ENCODE measurements at regions of chr4 and their contacts with region 1.

Region 1: DNA sequence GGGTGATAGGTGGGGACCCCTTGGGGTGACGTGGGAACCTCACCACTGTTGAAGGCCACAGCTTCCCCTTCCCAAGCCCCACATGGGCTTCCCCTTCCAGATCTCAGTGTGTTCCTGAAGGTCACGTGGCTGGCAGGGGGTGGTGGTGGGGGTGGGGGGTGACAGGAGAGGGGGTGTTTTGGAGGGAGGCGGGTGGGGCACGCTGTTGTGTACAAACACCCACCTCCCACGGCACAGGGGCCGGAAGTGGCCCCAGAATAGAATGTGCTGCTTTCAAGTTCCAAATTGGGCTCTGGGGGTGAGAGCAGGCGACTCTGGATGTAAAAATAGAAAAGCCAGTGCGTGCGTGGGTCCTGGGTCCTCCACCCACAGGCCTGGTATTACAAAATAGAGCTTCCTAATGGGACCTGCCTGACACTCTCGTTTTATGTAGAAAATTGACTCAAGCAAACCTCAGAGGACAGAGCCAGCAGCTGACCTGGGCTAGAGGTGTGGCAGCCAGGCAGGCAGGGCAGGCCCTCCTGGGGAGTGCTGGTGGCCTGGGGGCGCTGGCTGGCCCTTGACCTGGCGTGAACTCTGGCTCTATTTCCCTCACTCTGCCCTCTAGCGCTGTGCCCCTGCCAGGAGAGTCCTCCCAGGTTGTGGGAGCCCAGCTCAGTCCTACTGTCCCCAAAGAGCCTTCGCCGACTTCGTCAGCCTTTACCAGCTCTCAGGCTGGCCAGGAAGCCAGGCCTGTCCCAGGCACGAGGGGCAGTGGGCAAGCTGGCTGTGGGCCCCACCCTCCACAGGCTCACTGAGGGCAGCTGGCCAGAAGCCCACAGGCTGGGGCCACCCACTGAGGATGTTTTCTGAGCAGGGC is 5.4 kb upstream of the SH3BP2 start:
- DNase-seq: peak; percentile 87
- ATAC-seq: peak; percentile 47
- H3K4me3 Mint-ChIP-seq: no peak overlapping the region
- H3K27ac Mint-ChIP-seq: peak overlapping the region; percentile 95
- H3K4me1 Mint-ChIP-seq: peaks cover 50% of the 10 kb centered on the region
- H3K27me3 Mint-ChIP-seq: no peaks in the 10 kb centered on the region
- CTCF ChIP-seq: no peak

Region 2: GRCh38 chr4:2800691-2801596 is 13.5 kb after region 1 on chr4:
- CTCF ChIA-PET with region 1: interaction called, 4 read pairs
- POLR2A ChIA-PET with region 1: interaction called, 18 read pairs
- intact Hi-C with region 1: no loop called
- DNase-seq: peak; percentile 56
- ATAC-seq: peak; percentile 40
- H3K4me3 Mint-ChIP-seq: peak overlapping the region; percentile 58
- H3K27ac Mint-ChIP-seq: peak overlapping the region; percentile 59
- H3K4me1 Mint-ChIP-seq: peaks cover 47% of the 10 kb centered on the region
- H3K27me3 Mint-ChIP-seq: no peaks in the 10 kb centered on the region
- CTCF ChIP-seq: no peak

Region 3: GRCh38 chr4:2852481-2852921 is 65.0 kb after region 1 on chr4:
- CTCF ChIA-PET with region 1: no interaction called
- POLR2A ChIA-PET with region 1: no interaction called
- intact Hi-C with region 1: no loop called
- DNase-seq: no peak
- ATAC-seq: peak; percentile 50
- H3K4me3 Mint-ChIP-seq: peak overlapping the region; percentile 54
- H3K27ac Mint-ChIP-seq: peak overlapping the region; percentile 79
- H3K4me1 Mint-ChIP-seq: peaks cover 67% of the 10 kb centered on the region
- H3K27me3 Mint-ChIP-seq: no peaks in the 10 kb centered on the region
- CTCF ChIP-seq: no peak